ENCODE measurements at regions of chr1 and their contacts with region 1.

Region 1: GRCh38 chr1:28156821-28157220 is 19.7 kb downstream of the PTAFR start:
- DNase-seq: no peak
- ATAC-seq: no peak
- H3K4me3 ChIP-seq: no peak overlapping the region
- H3K27ac ChIP-seq: no peak overlapping the region
- H3K4me1 ChIP-seq: peaks cover 14% of the 10 kb centered on the region
- H3K27me3 ChIP-seq: no peaks in the 10 kb centered on the region
- CTCF ChIP-seq: no peak

Region 2: GRCh38 chr1:28045777-28046176 is 111.0 kb before region 1 on chr1:
- CTCF ChIA-PET with region 1: no interaction called
- POLR2A ChIA-PET with region 1: no interaction called
- intact Hi-C with region 1: no loop called
- DNase-seq: peak; percentile 52
- ATAC-seq: peak; percentile 80
- H3K4me3 ChIP-seq: no peak overlapping the region
- H3K27ac ChIP-seq: 0 out of 2 replicates have a peak overlapping the region, but pooled peaks have one; percentile 7
- H3K4me1 ChIP-seq: no peaks in the 10 kb centered on the region
- H3K27me3 ChIP-seq: no peaks in the 10 kb centered on the region
- CTCF ChIP-seq: no peak

Region 3: DNA sequence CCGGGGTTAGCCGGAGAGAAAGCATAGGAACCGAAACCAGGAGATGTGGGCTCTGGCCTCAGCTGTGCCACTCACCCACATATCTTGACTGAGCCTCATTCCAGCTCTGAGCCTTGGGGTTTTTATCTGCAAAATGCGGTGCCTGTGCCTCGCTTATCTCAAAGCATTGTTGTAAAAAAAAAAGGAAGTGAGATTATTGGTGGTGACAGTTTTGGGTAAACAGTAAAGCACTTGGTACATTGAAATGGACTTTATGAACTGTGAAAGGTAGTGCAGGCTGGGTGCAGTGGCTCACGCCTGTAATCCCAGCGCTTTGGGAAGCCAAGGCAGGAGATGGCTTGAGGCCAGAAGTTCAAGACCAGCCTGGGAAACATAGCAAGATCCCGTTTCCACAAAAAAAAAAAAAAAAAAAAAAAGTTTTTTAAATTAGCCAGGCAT is 15.9 kb after region 1 on chr1:
- CTCF ChIA-PET with region 1: no interaction called
- POLR2A ChIA-PET with region 1: interaction called, 58 read pairs
- intact Hi-C with region 1: no loop called
- DNase-seq: no peak
- ATAC-seq: no peak
- H3K4me3 ChIP-seq: no peak overlapping the region
- H3K27ac ChIP-seq: no peak overlapping the region
- H3K4me1 ChIP-seq: peaks cover 14% of the 10 kb centered on the region
- H3K27me3 ChIP-seq: no peaks in the 10 kb centered on the region
- CTCF ChIP-seq: no peak

Region 4: DNA sequence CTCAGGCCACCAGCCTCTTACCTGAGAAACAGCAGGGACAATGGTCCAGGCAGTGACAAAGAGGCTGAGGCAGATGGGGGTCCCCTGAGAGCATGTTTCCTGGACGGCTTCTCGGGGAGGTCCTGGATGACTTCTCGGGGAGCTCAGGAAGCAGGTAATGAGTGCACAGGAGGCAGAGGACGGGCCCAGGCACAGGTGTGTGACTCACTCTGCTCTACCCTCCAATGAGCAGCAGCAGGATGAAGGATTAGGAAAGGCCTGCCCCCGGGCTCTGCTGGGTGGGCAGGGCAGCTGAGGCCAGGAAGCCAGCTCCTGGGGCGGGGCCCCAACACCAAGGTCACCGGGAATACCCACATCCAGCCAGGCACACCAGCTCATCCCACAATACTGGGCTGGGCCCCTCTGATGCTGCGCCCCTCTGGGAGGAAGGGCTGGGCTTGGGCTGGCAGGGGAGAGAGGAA is 36.9 kb after region 1 on chr1:
- CTCF ChIA-PET with region 1: interaction called, 3 read pairs
- POLR2A ChIA-PET with region 1: interaction called, 8 read pairs
- intact Hi-C with region 1: loop called (anchors 1 kb)
- DNase-seq: peak; percentile 77
- ATAC-seq: peak; percentile 83
- H3K4me3 ChIP-seq: peak overlapping the region; percentile 41; the same call in 1 of the 2 replicates
- H3K27ac ChIP-seq: no peak overlapping the region
- H3K4me1 ChIP-seq: peaks cover 20% of the 10 kb centered on the region
- H3K27me3 ChIP-seq: no peaks in the 10 kb centered on the region
- CTCF ChIP-seq: no peak

Region 5: GRCh38 chr1:28208818-28209441 is 52.1 kb after region 1 on chr1:
- CTCF ChIA-PET with region 1: no interaction called
- POLR2A ChIA-PET with region 1: no interaction called
- intact Hi-C with region 1: no loop called
- DNase-seq: peak; percentile 80
- ATAC-seq: peak; percentile 88
- H3K4me3 ChIP-seq: no peak overlapping the region
- H3K27ac ChIP-seq: no peak overlapping the region
- H3K4me1 ChIP-seq: no peaks in the 10 kb centered on the region
- H3K27me3 ChIP-seq: no peaks in the 10 kb centered on the region
- CTCF ChIP-seq: peak; percentile 91

Region 6: DNA sequence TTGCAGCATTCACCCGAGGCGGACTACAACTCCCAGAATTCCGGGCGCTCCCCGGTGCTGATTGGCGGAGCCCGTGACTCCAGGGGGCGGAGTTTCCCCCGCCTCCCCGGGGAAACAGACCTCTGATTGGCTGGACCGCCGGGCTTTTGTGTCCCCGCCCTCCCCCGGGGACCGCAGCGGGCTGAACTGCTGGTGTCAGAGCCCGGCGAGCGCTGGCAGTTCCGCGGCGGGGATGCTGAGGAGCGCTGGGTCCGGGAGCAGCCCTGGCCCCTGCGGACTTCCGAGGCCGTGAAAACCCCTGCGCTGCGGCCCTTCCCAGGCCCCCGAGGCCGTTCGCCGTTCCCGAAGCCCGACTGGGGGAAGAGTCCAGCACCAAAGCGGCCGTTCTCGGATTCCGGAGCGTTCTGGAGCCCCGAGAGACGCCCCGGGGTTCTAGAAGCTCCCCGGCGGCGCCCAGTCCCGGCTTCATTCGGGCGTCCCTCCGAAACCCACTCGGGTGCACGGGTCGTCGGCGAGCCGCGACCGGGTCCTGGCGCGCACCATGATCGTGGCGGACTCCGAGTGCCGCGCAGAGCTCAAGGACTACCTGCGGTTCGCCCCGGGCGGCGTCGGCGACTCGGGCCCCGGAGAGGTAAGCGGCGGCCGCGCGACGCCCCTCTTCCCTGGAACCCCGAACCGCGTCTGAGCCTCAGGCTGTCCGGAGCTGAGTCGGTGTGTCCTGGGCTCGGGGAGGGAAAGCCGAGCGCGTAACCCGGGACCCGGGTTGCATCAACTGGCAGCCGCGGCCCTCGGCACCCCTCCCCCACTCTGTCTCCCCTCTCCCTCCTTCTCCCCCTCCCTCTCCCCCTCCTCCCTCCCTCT is 102.7 kb after region 1 on chr1 and contains the start of gene SESN2:
- CTCF ChIA-PET with region 1: no interaction called
- POLR2A ChIA-PET with region 1: no interaction called
- intact Hi-C with region 1: no loop called
- DNase-seq: peak; percentile 99
- ATAC-seq: peak; percentile 87
- H3K4me3 ChIP-seq: peak within 1 kb of the TSS; percentile 100
- H3K27ac ChIP-seq: peak within 1 kb of the TSS; percentile 80
- H3K4me1 ChIP-seq: peaks cover 17% of the 10 kb centered on the region
- H3K27me3 ChIP-seq: no peaks in the 10 kb centered on the region
- CTCF ChIP-seq: no peak
- total RNA-seq, gene SESN2: 6.9 and 10.7 TPM in 2 replicates